Cardiac septum (tissue), 1 donor: ENCODE measurements at regions of chr5 and their contacts with region 1.

Region 1: DNA sequence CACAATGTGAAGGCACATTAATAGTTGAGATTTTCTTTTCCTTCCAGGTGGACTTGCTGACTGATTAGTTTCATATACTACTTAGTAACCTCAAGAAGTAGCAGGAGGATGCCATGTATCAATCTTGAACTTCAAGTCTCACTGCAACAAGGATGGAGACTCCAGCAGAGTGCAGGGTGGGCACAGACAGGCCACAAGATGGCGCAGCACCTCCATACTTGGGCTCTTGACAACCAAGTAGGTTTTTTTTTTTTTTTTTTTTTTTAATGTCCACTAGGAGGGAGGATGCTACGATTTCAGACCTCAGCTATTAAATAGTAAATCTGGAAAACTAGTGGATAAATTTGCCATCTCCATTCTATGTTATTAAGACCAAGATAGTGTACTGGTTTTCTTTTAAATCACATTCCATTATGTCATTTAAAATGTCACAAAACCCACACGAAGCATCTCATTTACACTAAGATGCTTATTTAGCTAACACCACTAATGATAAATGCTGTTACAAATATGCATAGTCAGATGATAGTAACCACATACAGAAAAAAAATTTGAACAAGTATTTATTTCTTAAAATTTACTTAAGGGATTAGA is 58.6 kb downstream of the IL6ST start:
- DNase-seq: no peak

Region 2: DNA sequence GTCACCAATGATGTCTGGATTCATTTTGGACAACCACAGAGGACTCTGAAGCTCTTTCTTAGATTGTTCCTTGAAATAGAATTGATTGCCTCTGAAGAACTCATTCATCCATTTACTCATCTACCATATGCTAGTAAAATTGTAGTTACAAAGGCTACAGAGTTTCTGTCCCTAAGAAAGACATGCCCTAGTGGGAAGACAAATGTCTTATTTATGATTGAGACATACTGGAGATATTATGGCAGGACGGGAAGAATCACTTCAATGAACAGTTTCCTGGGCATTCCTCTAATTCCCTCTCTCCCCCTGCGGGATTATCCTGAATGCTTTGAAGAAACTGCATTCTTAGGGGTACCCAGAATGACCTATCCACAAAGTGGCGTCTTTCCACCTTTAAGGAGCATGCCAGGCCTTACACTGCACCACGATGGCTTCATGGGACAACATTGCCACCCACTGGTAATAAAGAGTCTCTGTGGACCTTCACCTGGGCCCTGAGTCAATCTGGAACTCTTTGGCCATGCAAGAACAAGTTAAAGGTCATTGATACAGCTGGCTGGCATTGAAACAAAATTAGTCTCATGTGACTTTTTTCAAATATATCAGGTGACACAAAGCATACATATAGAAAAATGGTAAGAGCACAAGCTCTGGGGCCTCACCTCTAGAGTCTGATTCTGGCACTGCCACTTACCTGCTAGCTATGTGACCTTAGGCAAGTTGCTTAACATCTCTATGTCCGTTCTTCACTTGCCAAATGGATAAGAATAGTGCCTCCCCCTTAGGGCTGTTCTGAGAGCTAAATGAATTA is 264.9 kb after region 1 on chr5:
- intact Hi-C with region 1: loop called (anchors 1 kb)
- DNase-seq: no peak

Region 3: GRCh38 chr5:56802205-56802604 is 866.0 kb after region 1 on chr5:
- intact Hi-C with region 1: no loop called
- DNase-seq: no peak

Region 4: DNA sequence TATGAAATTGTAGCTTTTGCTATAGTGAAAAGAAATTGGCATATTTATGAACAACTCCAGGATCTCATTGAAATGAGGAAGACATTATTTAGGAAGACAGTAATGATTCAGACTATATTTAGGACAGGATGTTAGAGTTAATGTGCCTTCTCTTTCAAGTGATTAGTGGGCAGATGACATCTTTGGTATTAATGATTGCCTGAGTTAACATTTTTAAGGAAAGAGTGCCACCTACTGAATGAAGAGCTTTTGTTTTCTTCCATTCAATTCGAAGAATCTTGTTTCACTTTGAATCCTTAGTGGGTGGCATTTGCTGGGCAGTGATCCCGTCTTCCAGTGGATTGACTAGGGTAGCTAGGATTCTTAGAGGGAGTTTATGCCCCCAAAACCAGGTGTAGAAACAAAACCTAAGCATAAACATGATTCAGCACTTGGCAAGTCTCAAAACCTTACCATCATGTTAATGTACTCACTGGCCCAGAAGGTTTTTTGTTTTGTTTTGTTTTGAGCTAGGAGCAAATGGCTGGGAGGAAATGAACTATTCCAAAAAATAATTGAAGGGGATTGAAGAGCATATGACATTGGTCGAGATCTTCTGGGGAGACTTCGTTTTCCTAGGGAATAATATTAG is 902.3 kb after region 1 on chr5:
- intact Hi-C with region 1: loop called (anchors 10 kb)
- DNase-seq: no peak